PC-9 (cell line): ENCODE measurements at regions of chr5 and their contacts with region 1.

Region 1: DNA sequence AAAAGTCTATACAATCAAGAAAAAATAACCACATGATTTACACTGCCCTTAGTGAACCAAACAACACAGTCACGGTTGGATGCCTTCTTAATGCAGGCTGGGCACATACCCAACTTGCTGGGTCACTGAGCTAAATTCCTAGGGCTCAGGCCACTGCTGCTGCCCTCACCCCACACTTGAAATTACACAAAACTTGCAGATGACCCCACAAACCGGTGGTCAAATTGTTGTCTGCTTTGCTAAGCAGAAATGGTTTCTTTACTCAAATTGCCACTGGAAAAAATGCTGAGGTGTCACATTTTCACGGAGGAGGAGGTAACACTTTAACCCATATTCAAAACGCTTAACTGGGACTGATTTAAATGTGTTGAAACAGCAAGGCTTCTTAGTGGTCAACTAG is 62.4 kb downstream of the HMHB1 start:
- DNase-seq: peak in 1 of 2 experiments; percentile 49
- H3K4me3 ChIP-seq: no peak overlapping the region
- H3K27ac ChIP-seq: no peak overlapping the region
- H3K4me1 ChIP-seq: peaks cover 14% of the 10 kb centered on the region; the same call in 1 of the 2 replicates
- H3K27me3 ChIP-seq: no peaks in the 10 kb centered on the region
- CTCF ChIP-seq: no peak

Region 2: GRCh38 chr5:142432369-142432863 is 1441.9 kb before region 1 on chr5:
- CTCF ChIA-PET with region 1: no interaction called
- POLR2A ChIA-PET with region 1: no interaction called
- intact Hi-C with region 1: no loop called
- DNase-seq: no peak
- H3K4me3 ChIP-seq: no peak overlapping the region
- H3K27ac ChIP-seq: no peak overlapping the region
- H3K4me1 ChIP-seq: no peaks in the 10 kb centered on the region
- H3K27me3 ChIP-seq: no peaks in the 10 kb centered on the region
- CTCF ChIP-seq: no peak

Region 3: DNA sequence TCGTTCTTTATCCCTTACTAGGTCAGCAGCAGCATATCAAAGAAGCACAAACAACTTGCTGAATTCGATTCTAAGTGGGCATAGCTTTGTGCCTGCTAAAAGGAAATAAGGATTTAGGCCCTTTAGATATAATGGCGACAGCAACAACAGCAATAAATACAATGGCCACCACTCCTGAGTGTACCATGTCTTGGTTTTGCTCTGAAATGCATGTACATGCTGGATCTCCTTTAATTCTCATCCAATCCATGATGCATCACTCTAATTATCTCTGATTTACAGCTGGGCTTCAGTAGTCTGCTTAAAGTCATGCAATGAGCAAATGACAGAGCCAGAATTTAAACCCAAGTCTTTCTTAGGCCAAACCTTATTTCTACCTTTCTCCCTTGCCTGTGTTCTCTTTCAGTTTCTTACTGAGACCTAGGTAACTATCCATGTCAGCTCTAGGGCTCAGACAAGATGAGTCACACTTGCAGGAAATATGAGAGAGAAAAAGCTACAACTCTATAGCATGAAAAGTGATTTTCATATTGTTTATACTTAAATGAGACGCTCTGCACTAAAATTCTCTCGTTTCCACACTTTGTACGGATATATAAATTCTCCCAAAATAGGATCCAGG is 49.4 kb after region 1 on chr5:
- CTCF ChIA-PET with region 1: no interaction called
- POLR2A ChIA-PET with region 1: no interaction called
- intact Hi-C with region 1: loop called (anchors 2 kb)
- DNase-seq: no peak
- H3K4me3 ChIP-seq: no peak overlapping the region
- H3K27ac ChIP-seq: peak overlapping the region; percentile 85; the same call in 1 of the 2 replicates
- H3K4me1 ChIP-seq: peaks cover 47% of the 10 kb centered on the region
- H3K27me3 ChIP-seq: no peaks in the 10 kb centered on the region
- CTCF ChIP-seq: no peak

Region 4: DNA sequence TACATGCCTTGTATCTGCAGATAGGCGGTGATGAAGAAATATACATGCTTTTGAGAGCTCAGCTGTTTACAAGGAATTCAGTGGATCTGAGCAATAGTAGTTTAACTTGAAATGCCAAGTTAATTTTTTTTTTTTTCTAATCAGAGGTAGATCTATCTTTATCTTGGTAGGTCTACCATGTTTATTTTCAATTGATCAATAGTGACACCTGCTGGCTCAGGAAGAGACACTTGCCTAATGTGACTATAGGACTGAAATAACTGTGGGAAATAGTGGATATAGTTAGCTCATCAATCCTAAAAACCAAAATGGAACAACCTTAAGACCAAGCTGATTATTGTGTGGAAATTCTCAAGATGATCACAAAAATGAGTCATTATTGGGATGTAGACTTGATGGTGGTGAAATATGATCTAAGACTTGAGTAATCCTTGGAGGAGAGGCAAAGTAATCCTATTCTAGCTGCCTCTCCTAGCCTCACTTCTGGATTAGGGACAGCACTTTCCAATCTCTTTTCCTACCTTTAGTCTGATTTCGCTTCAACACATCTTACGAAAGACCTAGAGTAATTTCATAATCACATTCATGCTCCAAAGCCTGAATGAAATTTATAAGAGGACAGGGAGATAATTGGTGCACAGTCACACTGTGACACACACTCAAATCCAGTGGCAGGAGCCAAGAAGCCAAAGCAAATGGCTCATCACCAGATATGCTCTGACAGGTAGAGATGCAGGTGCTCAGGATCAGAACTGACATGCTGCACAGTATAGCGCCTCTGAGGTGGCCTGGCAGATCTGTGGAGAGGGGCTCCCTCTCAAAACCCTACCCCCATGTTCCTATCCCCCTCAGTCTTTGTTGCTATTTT is 93.9 kb after region 1 on chr5:
- CTCF ChIA-PET with region 1: no interaction called
- POLR2A ChIA-PET with region 1: no interaction called
- intact Hi-C with region 1: loop called (anchors 5 kb)
- DNase-seq: peak; percentile 21 to 79
- H3K4me3 ChIP-seq: no peak overlapping the region
- H3K27ac ChIP-seq: peak overlapping the region; percentile 47; the same call in 1 of the 2 replicates
- H3K4me1 ChIP-seq: peaks cover 46% of the 10 kb centered on the region
- H3K27me3 ChIP-seq: no peaks in the 10 kb centered on the region
- CTCF ChIP-seq: peak; percentile 68

Region 5: DNA sequence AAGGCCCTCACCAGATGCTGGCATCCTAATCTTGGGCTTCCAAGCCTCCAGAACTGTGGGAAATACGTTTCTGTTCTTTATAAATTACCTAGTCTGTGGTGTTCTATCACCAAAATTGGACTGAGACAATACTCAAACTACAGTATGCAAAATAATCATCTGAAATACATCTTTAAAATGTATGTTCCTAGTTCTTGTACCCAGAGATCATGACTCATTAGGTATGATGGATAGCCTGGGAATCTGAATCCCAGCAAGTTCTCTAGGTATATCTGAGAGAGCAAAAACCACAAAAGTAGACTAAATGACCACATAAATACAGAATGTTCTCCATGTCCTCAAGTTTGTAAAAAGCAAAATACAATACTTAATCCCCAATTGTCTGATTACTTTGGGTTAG is 129.8 kb after region 1 on chr5:
- CTCF ChIA-PET with region 1: no interaction called
- POLR2A ChIA-PET with region 1: no interaction called
- intact Hi-C with region 1: no loop called
- DNase-seq: no peak
- H3K4me3 ChIP-seq: no peak overlapping the region
- H3K27ac ChIP-seq: no peak overlapping the region
- H3K4me1 ChIP-seq: no peaks in the 10 kb centered on the region
- H3K27me3 ChIP-seq: no peaks in the 10 kb centered on the region
- CTCF ChIP-seq: no peak

Region 6: DNA sequence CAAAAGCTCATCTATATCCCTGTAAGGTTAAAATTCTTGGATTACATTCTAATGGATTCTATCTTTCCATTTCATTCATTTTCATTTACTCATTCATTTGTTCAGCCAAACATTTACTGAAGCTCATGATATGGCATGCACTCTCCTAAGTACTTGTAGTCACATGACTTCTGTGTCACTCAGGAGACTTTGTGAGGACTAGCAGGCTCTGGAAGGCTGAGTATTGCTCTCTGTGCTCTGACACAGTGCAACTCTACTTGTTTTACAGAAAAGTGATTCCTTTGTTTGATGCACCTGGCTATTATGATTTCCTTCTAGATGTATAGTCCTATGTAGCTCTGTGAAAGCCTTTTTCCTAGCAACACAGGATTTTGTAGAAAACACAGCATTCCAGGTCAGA is 243.1 kb after region 1 on chr5:
- CTCF ChIA-PET with region 1: no interaction called
- POLR2A ChIA-PET with region 1: no interaction called
- intact Hi-C with region 1: no loop called
- DNase-seq: no peak
- H3K4me3 ChIP-seq: no peak overlapping the region
- H3K27ac ChIP-seq: no peak overlapping the region
- H3K4me1 ChIP-seq: no peaks in the 10 kb centered on the region
- H3K27me3 ChIP-seq: no peaks in the 10 kb centered on the region
- CTCF ChIP-seq: no peak

Region 7: DNA sequence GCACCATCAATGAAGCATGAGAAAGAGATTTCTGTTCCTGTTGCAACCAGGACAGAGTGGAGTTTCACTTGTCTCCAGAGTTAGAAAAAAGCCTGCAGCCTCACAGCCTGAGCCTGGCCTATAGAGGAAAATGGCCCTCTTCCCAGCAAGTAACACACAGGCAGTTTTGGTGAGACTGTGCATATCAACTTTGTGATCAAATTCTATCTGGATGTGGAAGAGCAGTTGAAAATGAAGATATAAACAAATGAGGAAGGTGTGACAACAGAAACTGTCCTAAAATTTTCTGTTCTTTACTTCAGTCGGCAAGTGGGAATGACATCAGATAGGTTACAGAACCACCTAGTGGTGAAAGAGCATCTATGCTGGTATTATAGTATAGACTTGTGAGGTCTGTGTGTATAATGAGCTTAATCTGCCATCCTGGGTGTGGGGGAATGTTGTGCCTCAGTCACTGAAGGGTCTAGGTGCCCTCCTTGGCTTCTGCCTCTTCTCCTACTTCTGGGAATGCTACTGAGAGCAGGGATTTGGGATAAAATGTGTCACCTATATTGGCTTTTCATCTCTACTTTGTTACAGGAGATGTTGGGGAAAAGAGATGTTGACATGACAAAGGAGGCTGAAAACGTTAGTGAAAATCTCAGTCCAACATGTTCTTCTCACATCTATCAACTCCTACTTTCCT is 268.0 kb after region 1 on chr5:
- CTCF ChIA-PET with region 1: no interaction called
- POLR2A ChIA-PET with region 1: no interaction called
- intact Hi-C with region 1: loop called (anchors 10 kb)
- DNase-seq: peak in 1 of 2 experiments; percentile 11
- H3K4me3 ChIP-seq: no peak overlapping the region
- H3K27ac ChIP-seq: no peak overlapping the region
- H3K4me1 ChIP-seq: 0 out of 2 replicates have a peak, but pooled peaks cover 8% of the 10 kb centered on the region
- H3K27me3 ChIP-seq: no peaks in the 10 kb centered on the region
- CTCF ChIP-seq: peak; percentile 85